ENCODE measurements at regions of chr3 and their contacts with region 1.

Region 1: DNA sequence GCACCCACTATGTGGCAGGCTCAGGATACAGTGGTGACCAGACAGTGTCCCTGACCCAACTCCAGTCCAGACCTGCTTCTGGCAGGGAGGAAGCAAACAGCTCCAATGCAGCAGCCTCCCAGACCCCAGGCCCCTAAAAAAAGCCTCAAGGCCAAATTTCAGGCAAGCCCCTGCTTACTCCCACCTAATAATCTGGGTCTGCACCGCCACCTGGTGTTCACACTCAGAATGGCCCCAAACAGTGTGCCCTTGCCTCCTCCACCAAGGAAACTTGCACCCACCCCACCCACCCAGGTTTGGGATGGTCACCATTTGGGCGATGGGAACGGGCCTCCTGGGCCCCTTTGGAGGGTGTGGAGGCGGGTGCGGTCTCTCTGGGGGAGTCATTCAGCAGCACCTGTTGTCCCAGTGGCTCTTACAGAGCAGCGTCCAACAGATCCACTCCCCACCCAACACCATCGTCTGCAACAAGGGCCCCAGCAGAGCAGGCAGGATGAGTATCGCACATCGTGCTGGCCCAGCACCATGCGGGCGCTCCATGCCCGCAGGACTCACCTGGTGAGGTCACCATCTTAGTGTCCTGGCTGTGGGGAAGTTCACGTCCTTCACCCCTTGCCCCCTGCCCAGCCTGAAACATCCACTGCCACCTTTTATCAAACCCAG is 17.3 kb downstream of the C3orf18 start:
- DNase-seq: peak; percentile 66 to 69 (median 68)
- ATAC-seq: peak; percentile 90
- H3K4me3 ChIP-seq: no peak overlapping the region
- H3K27ac ChIP-seq: no peak overlapping the region
- H3K4me1 ChIP-seq: peaks cover 0 to 6% of the 10 kb centered on the region in 2 experiments; a peak in 2 of 5 replicates
- H3K27me3 ChIP-seq: no peaks in the 10 kb centered on the region
- CTCF ChIP-seq: peak; percentile 69 to 80 (median 74)
- EP300 ChIP-seq: no peak
- POLR2A ChIP-seq: no peak
- RAD21 ChIP-seq: peak; percentile 57 to 70

Region 2: DNA sequence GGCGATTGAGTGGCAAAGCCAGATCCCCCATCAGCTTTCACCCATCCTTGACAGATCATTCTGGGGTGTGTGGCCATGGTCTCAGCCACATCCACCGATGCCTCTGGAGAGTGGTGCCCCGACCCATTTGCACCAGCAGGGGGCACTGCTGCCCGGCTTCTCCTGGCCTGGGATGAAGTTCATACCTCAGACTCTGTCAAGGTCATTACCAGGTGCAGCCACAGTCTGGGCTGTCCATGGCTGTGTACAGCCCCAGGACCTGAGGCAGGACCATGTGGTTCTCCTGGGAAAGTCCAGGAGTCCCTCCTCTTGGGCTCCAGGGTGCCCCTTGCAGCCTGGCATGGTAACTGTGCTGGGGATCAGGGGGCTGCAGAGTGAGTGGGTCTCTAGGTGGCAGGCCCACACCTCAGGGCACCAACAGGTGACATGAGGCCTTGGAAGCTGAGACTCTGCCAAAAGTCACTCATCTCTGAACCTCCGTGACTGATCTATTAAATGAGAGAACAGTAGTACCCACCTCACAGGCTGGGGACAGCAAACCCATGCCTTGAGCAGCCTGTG is 114.0 kb before region 1 on chr3:
- CTCF ChIA-PET with region 1: interaction called, 11 read pairs
- POLR2A ChIA-PET with region 1: interaction called, 3 read pairs
- in situ Hi-C with region 1: no loop called
- intact Hi-C with region 1: no loop called
- DNase-seq: peak; percentile 73 to 83 (median 82)
- ATAC-seq: peak; percentile 98
- H3K4me3 ChIP-seq: no peak overlapping the region
- H3K27ac ChIP-seq: no peak overlapping the region
- H3K4me1 ChIP-seq: peaks cover 5 to 13% of the 10 kb centered on the region in 2 experiments; a peak in 4 of 5 replicates
- H3K27me3 ChIP-seq: peaks cover 0 to 8% of the 10 kb centered on the region in 2 experiments; a peak in 2 of 5 replicates
- CTCF ChIP-seq: peak; percentile 78 to 85 (median 78)
- EP300 ChIP-seq: no peak
- POLR2A ChIP-seq: no peak
- RAD21 ChIP-seq: peak; percentile 49 to 86

Region 3: DNA sequence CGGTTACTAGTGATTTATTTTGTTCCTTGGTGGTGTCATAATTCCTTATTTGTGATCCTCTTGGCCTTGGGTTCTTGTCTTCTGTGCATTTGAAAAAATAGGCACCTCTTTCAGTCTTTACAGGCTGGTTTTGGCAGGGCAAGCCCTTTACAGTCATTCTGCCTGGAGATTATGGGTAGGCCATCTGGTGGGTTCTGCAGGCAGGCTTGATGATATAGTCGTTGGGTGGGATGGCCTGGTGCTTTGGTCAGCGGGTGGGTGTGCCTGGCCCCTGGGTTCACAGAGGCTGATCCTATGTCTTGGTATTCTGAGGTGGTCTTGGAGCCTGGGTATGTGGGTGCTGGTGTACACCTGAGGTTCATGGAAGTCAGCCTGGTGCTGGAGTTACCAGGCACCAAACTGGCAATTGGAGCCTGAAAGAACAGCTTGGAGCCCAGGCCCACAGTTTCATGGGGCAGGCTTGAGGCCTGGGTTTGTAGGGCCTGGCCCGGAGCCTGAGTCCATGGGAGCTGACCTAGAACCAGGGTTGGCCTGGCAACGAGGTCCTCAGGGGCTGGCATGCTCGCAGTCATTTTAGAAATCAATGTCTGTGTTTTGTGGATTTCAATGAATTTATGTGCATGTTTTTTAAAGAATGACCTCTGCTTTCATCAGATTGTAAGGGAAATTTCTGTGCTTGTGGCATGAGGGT is 187.8 kb after region 1 on chr3:
- CTCF ChIA-PET with region 1: no interaction called
- POLR2A ChIA-PET with region 1: no interaction called
- in situ Hi-C with region 1: no loop called
- intact Hi-C with region 1: no loop called
- DNase-seq: no peak
- ATAC-seq: no peak
- H3K4me3 ChIP-seq: no peak overlapping the region
- H3K27ac ChIP-seq: no peak overlapping the region
- H3K4me1 ChIP-seq: no peaks in the 10 kb centered on the region
- H3K27me3 ChIP-seq: no peaks in the 10 kb centered on the region
- CTCF ChIP-seq: no peak
- EP300 ChIP-seq: no peak
- POLR2A ChIP-seq: no peak
- RAD21 ChIP-seq: no peak

Measured in K562 (cell line).